Cardiac septum (tissue), 1 donor: ENCODE measurements at regions of chr16 and their contacts with region 1.

Region 1: GRCh38 chr16:10579965-10580882 is at the start of gene EMP2:
- DNase-seq: peak; percentile 91
- total RNA-seq, gene EMP2: 51.1 TPM

Region 2: GRCh38 chr16:10521681-10522274 is 58.4 kb before region 1 on chr16:
- intact Hi-C with region 1: loop called (anchors 5 kb)
- DNase-seq: no peak

Region 3: GRCh38 chr16:10534748-10535147 is 45.5 kb before region 1 on chr16:
- intact Hi-C with region 1: no loop called
- DNase-seq: no peak

Region 4: DNA sequence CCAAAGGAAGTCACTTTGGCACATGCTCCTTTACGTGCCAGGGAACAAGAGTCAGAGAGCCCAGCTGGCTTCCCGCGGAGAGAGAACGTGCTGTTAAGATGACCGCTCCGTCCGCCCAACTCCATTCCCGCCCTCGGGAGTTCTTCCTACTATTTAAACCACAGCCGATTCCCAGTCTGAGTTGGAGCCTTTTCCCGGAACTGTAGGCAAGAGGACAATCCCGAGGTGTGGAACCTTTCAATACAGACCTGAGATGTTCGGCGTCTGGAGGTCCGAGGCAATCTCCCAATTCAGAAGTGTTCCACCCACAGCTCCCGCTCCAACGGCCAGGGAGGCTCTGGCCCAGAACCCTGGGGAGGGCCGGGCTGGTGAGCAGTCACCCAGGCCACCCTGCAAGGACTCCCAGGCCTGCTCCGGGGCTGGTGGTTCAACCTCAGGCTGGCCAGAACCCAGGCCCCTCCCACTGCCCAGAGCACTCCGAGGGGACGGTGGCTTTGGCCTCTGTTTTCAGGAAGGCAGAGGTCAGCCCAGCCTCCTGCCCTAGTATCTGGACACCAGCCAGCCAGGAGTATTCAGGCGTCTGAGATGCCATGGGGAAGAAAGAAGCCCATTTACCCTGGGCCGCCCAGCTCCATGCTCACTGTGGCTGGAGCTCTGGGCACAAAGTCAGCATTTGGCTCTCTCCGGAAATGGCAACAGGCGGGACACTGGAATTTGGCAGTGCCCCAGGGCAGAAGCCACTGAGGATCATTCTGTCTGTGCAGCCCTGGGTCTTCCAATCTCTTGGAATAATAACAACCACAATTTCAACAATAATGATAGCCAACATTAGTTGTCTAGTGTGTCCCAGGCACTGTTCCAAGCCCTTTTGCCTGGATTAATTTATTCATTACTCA is 21.2 kb before region 1 on chr16:
- intact Hi-C with region 1: loop called (anchors 1 kb)
- DNase-seq: peak; percentile 86

Region 5: GRCh38 chr16:10616730-10617555 is 36.7 kb after region 1 on chr16:
- intact Hi-C with region 1: loop called (anchors 2 kb)
- DNase-seq: no peak

Region 6: GRCh38 chr16:10737068-10737625 is 156.9 kb after region 1 on chr16:
- intact Hi-C with region 1: loop called (anchors 5 kb)
- DNase-seq: no peak

Region 7: DNA sequence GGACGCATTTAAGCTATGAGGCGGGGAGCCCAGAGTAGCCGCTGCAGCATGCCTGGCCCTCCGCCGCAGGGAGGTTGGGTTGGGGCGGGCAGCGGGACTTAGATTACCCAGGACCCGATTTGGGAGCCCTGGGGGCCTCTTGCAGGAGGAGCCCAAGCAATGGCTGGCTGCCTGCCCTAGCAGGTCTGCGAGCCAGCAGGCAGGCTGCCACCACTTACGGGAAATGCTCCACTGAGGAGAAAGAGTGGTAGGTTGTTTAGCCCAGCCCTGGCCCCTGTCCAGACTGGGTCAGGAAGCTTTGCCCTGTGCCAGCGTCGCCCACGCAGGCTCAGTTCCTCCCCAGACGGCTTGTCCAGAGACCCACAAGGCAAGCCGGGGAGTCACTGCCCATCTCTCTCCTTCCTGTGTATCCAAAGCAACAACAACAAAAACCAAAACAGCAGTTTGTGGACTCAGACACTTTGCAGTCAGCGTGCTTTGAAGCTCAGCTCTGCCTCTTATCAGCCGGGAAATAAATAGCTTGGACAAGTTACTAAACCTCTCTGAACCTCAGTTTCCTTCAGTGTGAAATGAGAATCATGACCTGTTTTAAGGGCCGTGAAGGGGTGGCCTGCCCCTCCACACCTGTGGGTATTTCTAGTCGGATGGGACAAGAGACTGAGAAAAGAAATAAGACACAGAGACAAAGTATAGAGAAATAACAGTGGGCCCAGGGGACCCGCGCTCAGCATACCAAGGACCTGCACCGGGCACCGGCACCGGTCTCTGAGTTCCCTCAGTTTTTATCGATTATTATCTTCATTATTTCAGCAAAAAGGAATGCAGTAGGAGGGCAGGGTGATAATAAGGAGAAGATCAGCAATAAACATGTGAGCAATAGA is 248.9 kb after region 1 on chr16:
- intact Hi-C with region 1: loop called (anchors 5 kb)
- DNase-seq: peak; percentile 95

Region 8: GRCh38 chr16:10918294-10919002 is 338.2 kb after region 1 on chr16:
- intact Hi-C with region 1: loop called (anchors 10 kb)
- DNase-seq: peak; percentile 95